Activated CD4-positive, alpha-beta T cell treated with anti-CD3 and anti-CD28 coated beads, Interleukin-2, amount 10 ng/mL, durations not matched to agents 24 days and 14 days (primary cell): ENCODE measurements at regions of chr6 and their contacts with region 1.

Region 1: DNA sequence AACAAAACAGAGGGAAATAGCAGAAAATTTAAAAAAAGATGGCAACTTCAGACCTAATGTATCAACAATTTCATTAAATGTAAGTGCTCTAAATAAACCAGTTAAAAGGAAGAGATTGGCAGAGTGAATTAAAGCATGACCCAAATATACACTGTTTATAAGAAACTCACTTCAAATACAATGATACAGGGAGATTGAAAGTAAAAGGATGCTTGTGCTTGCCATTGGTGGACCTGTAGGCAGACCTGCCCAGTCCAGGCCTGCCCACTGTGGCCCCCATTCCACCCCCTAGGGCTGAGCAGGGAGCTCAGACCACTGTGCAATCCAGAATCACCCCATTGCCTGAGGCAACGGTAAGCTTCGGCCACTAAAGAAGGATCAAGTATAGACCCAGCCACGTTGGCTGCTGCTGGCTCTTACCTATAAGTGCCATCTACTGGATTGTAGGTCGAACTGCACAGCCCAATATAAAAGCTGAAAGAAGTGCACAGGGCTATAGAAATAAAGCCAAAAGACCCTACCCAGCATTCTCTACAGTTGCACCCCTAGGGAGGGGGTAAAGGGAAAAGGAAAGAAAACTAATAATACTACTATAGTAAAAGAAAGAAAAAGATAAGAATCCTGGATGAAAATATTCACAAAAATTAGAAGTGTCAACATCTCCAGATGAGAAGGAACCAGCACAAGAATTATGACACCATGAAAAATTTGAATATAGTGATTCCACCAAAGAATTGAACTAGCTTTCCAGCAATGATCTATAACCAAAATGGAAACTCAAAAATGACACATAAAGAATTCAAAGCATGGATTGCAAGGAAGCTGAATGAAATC is 36.1 kb downstream of the PSMB1 start:
- DNase-seq: peak; percentile 81
- H3K4me3 Mint-ChIP-seq: peak overlapping the region; percentile 38
- H3K27ac Mint-ChIP-seq: no peak overlapping the region
- H3K4me1 Mint-ChIP-seq: peaks cover 3% of the 10 kb centered on the region
- H3K27me3 Mint-ChIP-seq: peaks cover 66% of the 10 kb centered on the region

Region 2: DNA sequence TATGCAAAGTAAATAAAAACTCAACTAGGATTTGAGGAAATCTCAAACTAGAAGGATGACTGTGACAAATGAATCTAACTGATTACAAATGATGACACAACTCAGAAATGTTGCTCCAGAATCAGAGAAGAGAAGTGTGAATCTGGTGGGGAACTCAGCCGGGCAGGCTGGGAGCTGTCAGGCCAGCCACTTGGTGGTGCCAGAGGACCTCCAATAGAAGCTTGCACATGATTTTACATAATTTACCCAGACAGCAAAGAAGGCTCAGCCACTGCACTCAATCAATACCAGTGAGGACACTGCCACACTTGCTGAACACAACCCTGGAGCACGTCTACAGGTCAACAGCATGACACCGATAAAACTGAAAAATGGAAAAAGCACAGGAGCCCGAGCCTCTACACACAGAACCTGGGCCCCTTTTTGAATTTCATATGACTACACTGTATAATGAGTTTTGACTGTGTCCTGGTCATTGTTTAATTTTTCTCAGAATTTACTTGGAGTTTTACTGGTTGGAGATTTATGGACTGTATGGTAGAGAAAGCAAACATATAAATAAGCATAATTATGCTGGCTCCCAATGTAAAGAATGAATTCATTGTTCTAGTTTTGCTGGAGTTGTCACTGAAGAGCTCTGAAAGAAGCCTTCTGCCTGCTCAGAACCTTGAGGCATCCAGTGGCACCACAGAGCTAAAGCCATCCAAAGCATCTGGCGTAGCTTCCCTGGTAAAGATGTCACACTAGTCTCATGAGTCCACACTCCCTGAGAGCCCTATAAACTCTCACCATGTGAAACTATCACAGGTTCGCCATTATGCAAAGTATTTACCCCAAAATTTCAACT is 1559.9 kb before region 1 on chr6:
- intact Hi-C with region 1: loop called (anchors 5 kb)
- DNase-seq: peak; percentile 73
- H3K4me3 Mint-ChIP-seq: no peak overlapping the region
- H3K27ac Mint-ChIP-seq: no peak overlapping the region
- H3K4me1 Mint-ChIP-seq: no peaks in the 10 kb centered on the region
- H3K27me3 Mint-ChIP-seq: peaks cover 11% of the 10 kb centered on the region

Region 3: DNA sequence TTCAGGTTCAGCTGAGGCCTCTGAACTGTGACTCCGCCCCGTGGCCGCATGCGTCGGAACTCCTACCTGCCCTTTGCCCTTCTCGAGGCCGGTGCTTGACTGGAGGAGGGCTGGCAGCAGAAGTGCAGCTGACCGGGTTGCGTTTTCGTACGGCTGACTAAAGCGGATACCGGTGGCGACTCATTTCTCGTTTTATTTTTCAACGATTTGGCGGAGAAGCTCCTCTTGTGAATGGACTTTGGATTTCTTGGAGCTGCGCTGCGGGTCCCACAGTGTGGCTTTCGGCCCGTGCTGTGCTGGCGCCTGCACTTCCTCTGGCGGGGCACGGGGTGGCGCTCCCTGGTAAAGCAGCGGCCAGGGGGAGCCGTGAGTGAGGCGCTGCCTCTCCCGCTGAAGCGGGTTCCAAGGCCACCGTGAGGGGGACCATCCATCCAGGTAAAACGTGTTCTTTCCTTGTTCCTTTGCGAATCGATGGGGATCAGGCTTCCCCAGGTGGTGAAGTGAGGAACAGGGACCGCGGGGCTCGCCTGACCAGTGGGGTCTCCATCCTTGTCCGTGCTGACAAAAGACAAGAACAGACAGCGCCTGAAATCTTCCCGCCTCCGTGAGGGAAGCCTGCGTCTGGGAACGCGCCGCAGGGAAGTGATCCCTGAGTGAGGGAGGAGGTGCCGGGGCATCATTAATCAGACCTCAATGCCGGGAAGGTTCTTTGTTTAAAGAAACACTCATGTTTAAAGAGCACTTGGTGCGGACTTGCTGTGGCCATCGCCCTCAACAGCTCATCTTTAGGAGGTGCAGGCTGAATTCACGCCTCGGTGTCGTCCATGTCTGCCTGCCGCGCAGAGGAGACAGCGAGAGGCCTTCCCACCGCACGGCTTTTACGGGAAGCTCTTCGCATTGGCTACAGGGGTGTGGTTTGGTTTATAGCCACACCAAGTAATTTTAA is 726.7 kb before region 1 on chr6:
- intact Hi-C with region 1: loop called (anchors 2 kb)
- DNase-seq: peak; percentile 91
- H3K4me3 Mint-ChIP-seq: peak overlapping the region; percentile 88
- H3K27ac Mint-ChIP-seq: peak overlapping the region; percentile 53
- H3K4me1 Mint-ChIP-seq: peaks cover 15% of the 10 kb centered on the region
- H3K27me3 Mint-ChIP-seq: peaks cover 35% of the 10 kb centered on the region

Region 4: DNA sequence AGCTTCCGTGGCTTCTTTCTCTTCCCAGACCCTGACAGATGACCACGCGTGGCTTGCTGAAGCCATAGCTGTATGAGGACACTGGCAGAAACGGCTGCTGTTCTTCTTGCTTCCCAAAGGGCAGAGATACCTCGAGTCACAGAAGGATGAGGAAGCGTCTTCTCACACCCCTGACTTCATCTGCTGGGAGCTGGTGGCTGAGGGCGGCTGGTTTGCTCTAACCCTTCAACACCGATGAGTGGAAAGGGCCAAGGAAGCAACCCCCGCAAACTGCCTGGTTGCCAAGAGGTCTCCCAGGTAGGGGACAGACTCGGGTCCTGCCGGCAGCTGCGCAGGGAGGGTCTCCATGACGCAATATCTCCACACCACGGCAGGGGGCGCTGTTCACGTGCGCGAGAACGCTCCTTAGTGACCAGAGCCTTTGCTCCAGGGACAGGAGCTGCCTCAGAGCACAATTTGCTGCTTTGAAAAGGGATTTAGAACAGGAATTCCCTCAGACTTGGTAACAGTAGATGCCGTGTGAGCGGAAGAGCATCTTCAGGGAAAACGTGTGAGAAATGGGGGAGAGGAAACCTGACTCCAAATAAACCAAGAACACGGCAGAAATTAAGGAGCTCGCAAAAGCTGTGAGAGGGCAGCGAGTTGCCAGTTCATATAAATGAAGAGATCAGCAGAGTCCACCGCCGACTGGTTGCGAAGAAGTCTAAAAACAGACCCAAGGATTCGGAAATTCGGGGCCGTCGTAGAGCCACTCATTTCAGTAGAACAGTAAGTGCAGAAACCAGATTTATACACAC is 685.4 kb before region 1 on chr6:
- intact Hi-C with region 1: loop called (anchors 1 kb)
- DNase-seq: peak; percentile 91
- H3K4me3 Mint-ChIP-seq: no peak overlapping the region
- H3K27ac Mint-ChIP-seq: no peak overlapping the region
- H3K4me1 Mint-ChIP-seq: no peaks in the 10 kb centered on the region
- H3K27me3 Mint-ChIP-seq: peaks cover 39% of the 10 kb centered on the region

Region 5: GRCh38 chr6:169950558-169950957 is 566.4 kb before region 1 on chr6:
- intact Hi-C with region 1: loop called (anchors 1 kb)
- DNase-seq: peak; percentile 73
- H3K4me3 Mint-ChIP-seq: no peak overlapping the region
- H3K27ac Mint-ChIP-seq: no peak overlapping the region
- H3K4me1 Mint-ChIP-seq: no peaks in the 10 kb centered on the region
- H3K27me3 Mint-ChIP-seq: peaks cover 12% of the 10 kb centered on the region

Region 6: GRCh38 chr6:169990095-169991030 is 526.6 kb before region 1 on chr6:
- intact Hi-C with region 1: loop called (anchors 1 kb)
- DNase-seq: peak; percentile 82
- H3K4me3 Mint-ChIP-seq: peak overlapping the region; percentile 69
- H3K27ac Mint-ChIP-seq: peak overlapping the region; percentile 77
- H3K4me1 Mint-ChIP-seq: peaks cover 20% of the 10 kb centered on the region
- H3K27me3 Mint-ChIP-seq: peaks cover 6% of the 10 kb centered on the region

Region 7: GRCh38 chr6:170480050-170480692 is 36.8 kb before region 1 on chr6:
- intact Hi-C with region 1: no loop called
- DNase-seq: no peak
- H3K4me3 Mint-ChIP-seq: no peak overlapping the region
- H3K27ac Mint-ChIP-seq: no peak overlapping the region
- H3K4me1 Mint-ChIP-seq: no peaks in the 10 kb centered on the region
- H3K27me3 Mint-ChIP-seq: no peaks in the 10 kb centered on the region

Region 8: DNA sequence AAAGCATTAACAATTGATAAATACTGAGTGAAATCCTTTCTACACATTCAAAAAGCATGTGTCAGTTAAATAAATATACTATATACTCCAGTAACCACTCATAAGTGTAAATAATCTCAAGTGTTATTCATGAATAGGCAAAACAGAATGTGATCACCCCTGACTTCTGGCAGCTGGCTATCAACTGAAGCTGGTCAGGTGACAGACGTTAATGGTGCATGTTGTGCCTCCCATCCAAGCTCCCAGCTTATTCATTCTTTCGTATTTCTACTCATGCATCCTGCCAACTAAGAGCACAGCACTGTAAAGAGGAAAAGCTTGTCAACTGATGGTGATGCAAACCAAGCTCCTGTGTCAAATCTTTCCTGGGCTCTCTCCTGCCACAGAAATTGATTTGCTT is 28.4 kb after region 1 on chr6:
- intact Hi-C with region 1: no loop called
- DNase-seq: no peak
- H3K4me3 Mint-ChIP-seq: no peak overlapping the region
- H3K27ac Mint-ChIP-seq: no peak overlapping the region
- H3K4me1 Mint-ChIP-seq: peaks cover 32% of the 10 kb centered on the region
- H3K27me3 Mint-ChIP-seq: no peaks in the 10 kb centered on the region